ENCODE measurements at regions of chr16 and their contacts with region 1.

Region 1: DNA sequence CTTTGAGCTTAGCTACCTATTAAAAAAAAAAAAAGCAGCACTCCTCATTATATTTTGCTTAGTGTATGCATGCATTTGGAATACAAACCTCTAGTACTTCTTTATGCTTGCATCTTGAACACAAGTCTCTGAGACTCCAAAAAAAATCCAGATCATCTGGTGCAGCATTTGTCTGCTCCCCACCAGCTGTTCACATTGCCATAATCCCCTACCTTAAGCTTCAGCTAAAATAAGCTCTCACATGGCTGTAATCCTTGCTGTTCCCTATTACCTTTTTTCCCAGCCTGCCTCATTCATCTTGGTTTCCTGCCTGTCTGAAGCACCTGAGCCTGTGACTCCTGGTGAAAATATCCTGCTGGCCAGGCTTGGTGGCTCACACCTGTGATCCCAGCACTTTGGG is 7.5 kb upstream of the NFATC2IP start:
- DNase-seq: no peak
- ATAC-seq: no peak
- H3K4me3 ChIP-seq: no peak overlapping the region
- H3K27ac ChIP-seq: no peak overlapping the region
- H3K4me1 ChIP-seq: peaks cover 3% of the 10 kb centered on the region; the same call in 1 of the 2 replicates
- H3K27me3 ChIP-seq: no peaks in the 10 kb centered on the region
- CTCF ChIP-seq: no peak

Region 2: GRCh38 chr16:27993587-27993986 is 949.7 kb before region 1 on chr16:
- CTCF ChIA-PET with region 1: no interaction called
- POLR2A ChIA-PET with region 1: no interaction called
- in situ Hi-C with region 1: no loop called
- intact Hi-C with region 1: no loop called
- DNase-seq: no peak
- ATAC-seq: no peak
- H3K4me3 ChIP-seq: no peak overlapping the region
- H3K27ac ChIP-seq: no peak overlapping the region
- H3K4me1 ChIP-seq: no peaks in the 10 kb centered on the region
- H3K27me3 ChIP-seq: no peaks in the 10 kb centered on the region
- CTCF ChIP-seq: no peak

Region 3: DNA sequence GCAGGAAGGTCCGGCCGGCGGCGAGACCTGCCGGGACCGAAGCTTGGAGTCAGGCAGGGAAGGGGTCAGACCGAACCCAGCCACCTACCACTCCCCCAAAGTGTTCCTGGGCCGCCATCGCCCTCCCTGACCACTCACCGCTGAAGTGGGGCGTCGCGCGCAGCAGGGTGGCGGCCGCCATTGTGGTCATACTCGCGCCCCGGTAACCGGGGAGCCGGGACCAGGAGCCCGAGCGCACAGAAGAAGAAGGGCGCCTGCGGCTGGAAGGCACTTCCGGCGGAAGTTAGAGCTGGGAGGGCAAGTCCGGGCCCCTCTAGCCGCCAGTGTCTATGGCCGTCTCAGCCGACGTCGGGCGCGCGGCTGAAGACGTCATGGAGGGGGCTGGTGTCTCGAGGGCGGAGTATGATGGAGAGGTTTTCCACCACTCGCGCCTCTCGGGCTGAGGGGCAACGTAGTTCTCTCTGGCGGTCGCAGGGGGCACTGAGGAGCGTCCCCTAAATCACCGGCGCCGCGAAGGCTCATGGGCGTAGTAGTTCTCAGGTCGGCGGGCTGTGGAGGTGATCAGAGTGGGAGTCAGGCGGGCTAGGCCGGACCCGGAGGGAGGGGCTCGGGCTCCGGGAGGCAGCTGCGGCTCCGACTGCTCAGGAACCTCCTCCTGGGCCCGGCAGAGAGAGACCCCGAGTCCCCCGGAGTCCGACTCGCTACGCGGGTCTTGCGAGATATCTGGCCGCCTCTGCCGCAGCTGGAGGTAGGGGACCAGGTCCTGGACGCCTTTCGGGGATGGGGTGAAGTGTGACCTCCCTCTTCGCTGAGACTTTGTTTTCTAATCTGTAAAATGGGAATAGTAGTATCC is 97.0 kb before region 1 on chr16 and contains the start of gene TUFM:
- CTCF ChIA-PET with region 1: interaction called, 3 read pairs
- POLR2A ChIA-PET with region 1: interaction called, 3 read pairs
- in situ Hi-C with region 1: no loop called
- intact Hi-C with region 1: loop called (anchors 10 kb)
- DNase-seq: peak; percentile 79
- ATAC-seq: peak; percentile 98
- H3K4me3 ChIP-seq: peak within 1 kb of the TSS; percentile 94 to 97
- H3K27ac ChIP-seq: peak within 1 kb of the TSS; percentile 87
- H3K4me1 ChIP-seq: peaks cover 6% of the 10 kb centered on the region; the same call in 1 of the 2 replicates
- H3K27me3 ChIP-seq: no peaks in the 10 kb centered on the region
- CTCF ChIP-seq: peak; percentile 88; the same call in 1 of the 2 replicates
- total RNA-seq, gene TUFM: 231 TPM

Region 4: DNA sequence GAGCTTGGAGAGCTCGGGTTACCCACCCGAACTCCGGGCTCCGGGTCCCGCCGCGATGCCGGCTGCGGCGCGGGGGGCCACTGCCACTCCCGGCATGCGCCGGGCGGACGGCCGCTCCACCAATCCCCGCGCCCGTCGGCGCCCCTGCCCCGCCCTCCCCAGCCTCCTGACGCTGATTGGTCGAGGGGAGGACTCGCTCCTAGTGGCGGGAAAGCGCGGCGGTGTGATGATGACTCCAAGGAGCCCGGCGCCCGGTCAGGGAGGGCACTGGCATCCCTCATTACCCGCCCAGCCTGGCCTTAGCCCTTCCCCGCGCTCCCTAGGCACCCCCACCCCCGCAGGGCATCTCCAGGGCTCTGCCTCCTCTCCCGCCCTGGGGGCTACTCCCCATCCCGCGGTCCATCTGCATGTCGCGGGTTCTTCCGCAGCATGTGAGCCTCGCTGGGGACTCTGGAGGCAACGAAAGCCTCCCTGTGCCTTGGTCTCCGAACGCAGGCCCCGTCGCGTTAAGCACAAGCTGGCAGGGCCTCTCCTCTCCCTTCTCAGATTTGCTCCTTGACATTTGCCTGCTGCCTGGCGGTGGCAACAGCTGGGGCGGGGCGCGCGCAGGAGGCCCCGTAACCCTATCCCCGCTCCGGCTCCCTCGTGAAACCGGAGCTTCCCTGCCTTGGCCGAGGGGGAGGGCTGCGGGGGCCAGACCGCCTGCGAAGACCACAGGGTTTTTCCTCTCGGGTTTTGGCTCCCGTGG is 63.3 kb before region 1 on chr16:
- CTCF ChIA-PET with region 1: interaction called, 7 read pairs
- POLR2A ChIA-PET with region 1: no interaction called
- in situ Hi-C with region 1: no loop called
- intact Hi-C with region 1: loop called (anchors 10 kb)
- DNase-seq: peak; percentile 30
- ATAC-seq: peak; percentile 92
- H3K4me3 ChIP-seq: peak overlapping the region; percentile 70 to 76
- H3K27ac ChIP-seq: peak overlapping the region; percentile 77
- H3K4me1 ChIP-seq: peaks cover 31% of the 10 kb centered on the region
- H3K27me3 ChIP-seq: no peaks in the 10 kb centered on the region
- CTCF ChIP-seq: no peak